ENCODE measurements at regions of chr17 and their contacts with region 1.

Region 1: GRCh38 chr17:7219812-7220581 is at the starts of genes ACADVL and DLG4:
- DNase-seq: peak; percentile 90
- ATAC-seq: peak; percentile 58
- H3K4me3 Mint-ChIP-seq: peak within 1 kb of the TSS; percentile 89
- H3K27ac Mint-ChIP-seq: peak within 1 kb of the TSS; percentile 93
- H3K4me1 Mint-ChIP-seq: peaks cover 48% of the 10 kb centered on the region
- H3K27me3 Mint-ChIP-seq: peaks cover 4% of the 10 kb centered on the region; the same call in 1 of the 2 replicates
- CTCF ChIP-seq: no peak
- total RNA-seq, gene ACADVL: 213 to 236 TPM (median 221 TPM) in 3 replicates
- total RNA-seq, gene DLG4: 47.1 to 59.7 TPM (median 48.0 TPM) in 3 replicates

Region 2: GRCh38 chr17:7095625-7096024 is 124.4 kb before region 1 on chr17:
- CTCF ChIA-PET with region 1: no interaction called
- POLR2A ChIA-PET with region 1: no interaction called
- DNase-seq: no peak
- ATAC-seq: no peak
- H3K4me3 Mint-ChIP-seq: no peak overlapping the region
- H3K27ac Mint-ChIP-seq: no peak overlapping the region
- H3K4me1 Mint-ChIP-seq: peaks cover 10% of the 10 kb centered on the region; the same call in 1 of the 2 replicates
- H3K27me3 Mint-ChIP-seq: peaks cover 12% of the 10 kb centered on the region
- CTCF ChIP-seq: no peak

Region 3: GRCh38 chr17:7114875-7115614 is 105.0 kb before region 1 on chr17:
- CTCF ChIA-PET with region 1: no interaction called
- POLR2A ChIA-PET with region 1: no interaction called
- DNase-seq: no peak
- ATAC-seq: no peak; the same call in 1 of the 2 replicates
- H3K4me3 Mint-ChIP-seq: no peak overlapping the region
- H3K27ac Mint-ChIP-seq: 0 out of 2 replicates have a peak overlapping the region, but pooled peaks have one; percentile 30
- H3K4me1 Mint-ChIP-seq: peaks cover 25% of the 10 kb centered on the region
- H3K27me3 Mint-ChIP-seq: peaks cover 7% of the 10 kb centered on the region
- CTCF ChIP-seq: no peak

Region 4: DNA sequence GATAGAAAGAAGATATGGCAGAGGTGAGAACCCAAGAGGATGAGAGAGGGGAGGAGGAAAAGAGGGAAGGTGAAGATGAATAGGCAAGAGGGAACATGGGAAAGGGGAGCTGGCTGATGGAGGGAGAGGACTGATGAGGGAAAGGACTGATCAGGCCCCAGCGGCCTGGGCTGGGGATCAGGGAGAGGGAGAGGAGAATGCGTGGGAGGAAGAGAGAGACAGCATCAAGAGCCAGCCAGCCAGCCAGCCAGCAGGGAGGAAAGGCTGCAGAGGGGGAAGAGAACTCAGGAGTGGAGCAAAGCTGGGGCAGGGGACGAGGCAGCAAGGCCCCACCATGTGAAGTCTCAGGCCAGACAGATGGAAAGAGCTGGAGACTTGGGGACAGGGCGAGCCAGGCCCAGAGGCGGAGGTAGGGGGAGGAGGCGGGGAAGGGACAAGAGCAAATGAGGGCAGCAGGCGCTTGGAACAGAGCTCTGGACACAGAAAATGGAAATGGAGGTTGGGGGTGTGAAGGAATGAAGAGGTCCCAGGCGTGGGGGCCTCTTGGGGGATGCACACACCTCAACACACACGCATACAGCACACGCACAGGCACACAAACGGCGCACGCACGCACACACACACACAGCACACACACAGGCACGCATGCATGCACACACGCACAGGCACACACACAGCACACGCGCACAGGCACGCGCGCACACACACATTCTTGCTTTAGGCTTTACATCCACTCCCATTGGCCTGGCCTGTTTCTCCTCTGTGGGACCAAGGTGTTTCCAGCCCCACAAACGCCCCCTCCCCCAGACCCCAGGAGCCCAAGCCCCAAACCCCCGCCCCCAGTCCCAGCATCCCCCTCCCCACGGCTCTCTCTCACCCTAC is 12.6 kb before region 1 on chr17:
- CTCF ChIA-PET with region 1: interaction called, 24 read pairs
- POLR2A ChIA-PET with region 1: interaction called, 8 read pairs
- DNase-seq: no peak
- ATAC-seq: no peak
- H3K4me3 Mint-ChIP-seq: peak overlapping the region; percentile 59
- H3K27ac Mint-ChIP-seq: peak overlapping the region; percentile 29; the same call in 1 of the 2 replicates
- H3K4me1 Mint-ChIP-seq: peaks cover 55% of the 10 kb centered on the region
- H3K27me3 Mint-ChIP-seq: no peaks in the 10 kb centered on the region
- CTCF ChIP-seq: no peak

Region 5: DNA sequence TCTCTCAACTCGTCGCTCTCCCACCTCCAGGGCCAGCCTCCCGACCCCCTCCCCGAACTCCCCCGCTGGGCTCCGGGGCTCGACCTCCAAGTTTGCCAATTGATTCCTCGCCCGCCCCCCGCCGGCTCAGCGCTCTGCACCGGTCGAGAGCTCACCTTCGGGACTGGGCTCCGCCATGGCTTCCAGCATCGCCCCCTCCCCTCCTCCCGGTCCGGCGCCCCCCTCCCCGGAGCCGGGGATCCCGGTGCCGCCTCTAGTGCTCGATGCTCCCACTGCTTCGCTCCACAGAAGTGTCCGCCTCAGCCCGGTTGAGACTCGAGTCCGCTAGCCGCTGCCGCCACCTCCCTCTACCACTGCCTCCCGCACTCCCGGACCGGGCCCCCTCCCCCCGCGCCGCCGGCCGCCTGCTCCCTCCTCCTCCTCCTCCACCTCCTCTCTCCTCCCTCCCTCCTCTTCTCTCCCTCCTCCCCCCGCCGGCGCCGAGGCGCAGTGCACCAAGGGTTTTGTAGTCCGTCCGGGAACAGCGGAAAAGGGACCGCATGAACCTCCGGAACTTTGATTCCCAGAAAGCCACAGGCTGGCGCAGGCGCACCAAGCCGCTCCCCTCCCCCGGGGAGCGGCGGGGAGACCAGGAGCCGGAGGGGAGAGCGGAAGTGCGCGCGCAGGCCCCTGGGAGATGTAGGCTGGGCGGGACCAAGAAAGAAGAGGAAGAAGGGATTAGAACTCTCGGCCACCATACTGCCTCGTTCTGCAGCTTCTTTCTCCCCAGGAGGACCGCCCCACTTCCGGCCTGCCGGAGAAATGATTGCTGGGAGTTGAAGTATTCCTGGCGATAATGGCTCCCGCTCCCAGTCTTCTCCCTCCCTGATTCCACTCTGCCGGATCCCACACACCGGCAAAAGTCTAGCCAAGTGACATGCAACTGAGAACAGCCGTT is 19.4 kb after region 1 on chr17 and contains the start of gene PHF23:
- CTCF ChIA-PET with region 1: interaction called, 36 read pairs
- POLR2A ChIA-PET with region 1: interaction called, 8 read pairs
- DNase-seq: peak; percentile 99
- ATAC-seq: peak; percentile 73
- H3K4me3 Mint-ChIP-seq: peak within 1 kb of the TSS; percentile 95
- H3K27ac Mint-ChIP-seq: peak within 1 kb of the TSS; percentile 93
- H3K4me1 Mint-ChIP-seq: peaks cover 39% of the 10 kb centered on the region
- H3K27me3 Mint-ChIP-seq: no peaks in the 10 kb centered on the region
- CTCF ChIP-seq: no peak
- total RNA-seq, gene PHF23: 45.8 to 50.1 TPM (median 49.1 TPM) in 3 replicates

Region 6: GRCh38 chr17:7296189-7296902 is 76.3 kb after region 1 on chr17:
- CTCF ChIA-PET with region 1: interaction called, 26 read pairs
- POLR2A ChIA-PET with region 1: no interaction called
- DNase-seq: peak; percentile 94
- ATAC-seq: peak; percentile 27
- H3K4me3 Mint-ChIP-seq: peak overlapping the region; percentile 70
- H3K27ac Mint-ChIP-seq: no peak overlapping the region
- H3K4me1 Mint-ChIP-seq: peaks cover 23% of the 10 kb centered on the region
- H3K27me3 Mint-ChIP-seq: peaks cover 76% of the 10 kb centered on the region
- CTCF ChIP-seq: peak; percentile 90; the same call in 1 of the 2 replicates

Measured in WTC11 (cell line).